PC-3 (cell line): ENCODE measurements at regions of chr4 and their contacts with region 1.

Region 1: GRCh38 chr4:87188048-87188447 is 32.4 kb downstream of the KLHL8 start:
- DNase-seq: peak; percentile 58
- ATAC-seq: peak; percentile 72
- H3K4me3 ChIP-seq: no peak overlapping the region
- H3K27ac ChIP-seq: no peak overlapping the region
- H3K4me1 ChIP-seq: peaks cover 16% of the 10 kb centered on the region
- H3K27me3 ChIP-seq: no peaks in the 10 kb centered on the region
- CTCF ChIP-seq: no peak

Region 2: GRCh38 chr4:87166296-87166854 is 21.7 kb before region 1 on chr4:
- CTCF ChIA-PET with region 1: no interaction called
- POLR2A ChIA-PET with region 1: interaction called, 10 read pairs
- intact Hi-C with region 1: no loop called
- DNase-seq: no peak
- ATAC-seq: no peak
- H3K4me3 ChIP-seq: no peak overlapping the region
- H3K27ac ChIP-seq: no peak overlapping the region
- H3K4me1 ChIP-seq: no peaks in the 10 kb centered on the region
- H3K27me3 ChIP-seq: no peaks in the 10 kb centered on the region
- CTCF ChIP-seq: no peak

Region 3: DNA sequence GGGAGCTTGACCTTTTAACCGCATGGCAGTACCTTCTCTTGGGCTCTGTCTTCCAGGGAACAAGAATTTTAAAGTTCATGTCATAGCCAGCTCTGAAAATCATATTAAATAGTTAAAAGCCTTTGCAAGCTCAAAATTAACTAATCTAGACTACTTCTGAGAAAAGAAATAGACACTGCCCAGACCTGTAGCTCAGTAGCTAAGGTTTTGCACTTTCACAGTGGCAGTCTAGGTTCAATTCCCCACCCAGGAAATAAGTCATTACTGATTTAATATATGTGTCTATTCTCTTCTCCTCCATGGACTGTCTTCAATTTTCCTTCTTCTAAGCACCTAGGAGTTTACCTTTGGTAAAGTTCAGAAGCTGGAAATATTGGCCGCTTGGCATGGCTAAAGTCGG is 175.5 kb after region 1 on chr4:
- CTCF ChIA-PET with region 1: no interaction called
- POLR2A ChIA-PET with region 1: interaction called, 25 read pairs
- intact Hi-C with region 1: no loop called
- DNase-seq: peak; percentile 42
- ATAC-seq: no peak
- H3K4me3 ChIP-seq: no peak overlapping the region
- H3K27ac ChIP-seq: no peak overlapping the region
- H3K4me1 ChIP-seq: no peaks in the 10 kb centered on the region
- H3K27me3 ChIP-seq: no peaks in the 10 kb centered on the region
- CTCF ChIP-seq: no peak